Activated B cell treated with CpG ODN at 0.5 μM for 24 hours (primary cell): ENCODE measurements at regions of chr3 and their contacts with region 1.

Region 1: DNA sequence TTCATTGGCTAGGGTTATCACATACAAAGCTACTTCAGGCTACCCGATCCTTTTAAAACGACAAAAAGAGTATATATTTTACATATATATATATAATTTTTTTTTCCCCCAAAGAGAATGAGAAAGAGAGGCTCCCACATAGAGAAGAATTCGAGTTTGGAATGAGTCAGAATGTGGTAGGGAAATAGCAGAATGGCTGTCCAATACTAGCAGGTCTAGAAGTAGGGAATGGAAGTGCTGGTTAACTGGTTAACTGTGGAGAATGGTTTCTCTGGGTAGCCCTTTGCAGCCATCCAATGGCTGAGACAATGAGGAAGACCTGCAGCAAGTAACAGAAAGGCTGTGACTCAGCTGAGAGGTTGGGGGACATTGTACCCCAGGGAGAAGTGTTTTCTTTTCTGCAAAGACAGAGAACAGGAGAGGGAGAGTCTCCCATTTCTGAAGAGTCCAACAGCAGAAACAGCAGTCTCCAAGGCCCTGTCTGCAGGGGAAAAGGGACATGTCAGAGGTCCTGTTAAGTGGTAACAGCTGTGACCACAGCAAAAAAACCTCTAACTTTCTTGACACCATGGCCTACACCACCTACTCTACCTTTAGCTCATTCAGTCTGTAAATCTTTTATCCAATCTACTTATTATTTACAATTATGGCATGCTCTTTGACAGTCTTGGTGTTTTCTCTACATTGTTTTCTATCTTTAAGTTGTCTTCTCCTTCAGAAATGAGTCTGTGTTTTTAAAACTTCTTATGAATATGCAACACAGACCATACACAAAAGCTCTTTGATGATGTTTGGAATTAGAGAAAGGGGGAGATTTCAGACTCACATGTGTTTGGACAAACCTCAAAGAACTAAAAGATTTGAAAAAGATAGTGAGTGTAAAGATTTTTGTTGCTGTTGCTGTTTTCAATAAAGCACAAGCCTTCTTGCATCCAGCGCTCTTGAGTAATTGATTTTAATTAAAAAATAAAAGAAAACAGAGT is 116.1 kb upstream of the SLC7A14 start:
- DNase-seq: no peak
- ATAC-seq: no peak
- H3K4me3 Mint-ChIP-seq: no peak overlapping the region
- H3K27ac Mint-ChIP-seq: no peak overlapping the region
- H3K4me1 Mint-ChIP-seq: no peaks in the 10 kb centered on the region
- H3K27me3 Mint-ChIP-seq: peaks cover 12% of the 10 kb centered on the region
- CTCF ChIP-seq: no peak

Region 2: DNA sequence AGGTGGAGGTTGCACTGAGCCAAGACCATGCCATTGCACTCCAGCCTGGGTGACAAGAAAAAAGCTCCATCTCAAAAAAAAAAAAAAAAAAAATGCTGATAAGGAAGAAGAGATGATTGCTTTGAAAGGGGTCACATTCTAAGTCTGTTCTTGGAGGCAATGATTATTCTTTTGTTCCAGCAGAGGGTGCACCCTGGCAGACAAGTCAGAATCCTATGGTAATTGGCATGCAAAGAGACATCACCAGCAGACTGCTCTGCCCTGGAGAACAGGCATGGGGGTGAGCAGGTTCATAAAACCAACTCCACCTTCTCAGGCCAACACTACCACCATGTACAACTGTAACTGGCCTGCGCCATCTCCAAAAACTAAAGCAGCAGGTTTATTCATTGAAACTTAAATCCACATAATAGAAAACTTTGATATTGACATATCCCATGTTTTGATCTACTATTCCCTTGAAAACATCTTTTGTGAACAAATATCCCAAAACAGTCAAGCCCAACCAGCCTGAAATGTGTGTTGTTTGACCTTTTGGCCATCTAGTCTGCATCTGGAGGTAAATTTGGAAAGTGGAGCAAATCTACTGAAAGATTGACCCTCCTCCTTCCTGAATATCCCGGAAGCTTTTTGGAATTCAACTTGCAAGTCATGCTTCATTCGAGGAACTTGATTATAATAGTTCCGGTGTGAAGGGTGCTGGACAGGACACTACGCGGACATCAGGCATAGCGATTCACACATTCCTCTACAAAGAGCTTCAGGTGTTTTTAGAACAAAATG is 1138.8 kb before region 1 on chr3:
- CTCF ChIA-PET with region 1: no interaction called
- POLR2A ChIA-PET with region 1: no interaction called
- intact Hi-C with region 1: no loop called
- DNase-seq: no peak
- ATAC-seq: peak; percentile 49
- H3K4me3 Mint-ChIP-seq: no peak overlapping the region
- H3K27ac Mint-ChIP-seq: no peak overlapping the region
- H3K4me1 Mint-ChIP-seq: no peaks in the 10 kb centered on the region
- H3K27me3 Mint-ChIP-seq: no peaks in the 10 kb centered on the region
- CTCF ChIP-seq: no peak

Region 3: GRCh38 chr3:169984292-169984691 is 717.7 kb before region 1 on chr3:
- CTCF ChIA-PET with region 1: no interaction called
- POLR2A ChIA-PET with region 1: no interaction called
- intact Hi-C with region 1: no loop called
- DNase-seq: no peak
- ATAC-seq: no peak
- H3K4me3 Mint-ChIP-seq: no peak overlapping the region
- H3K27ac Mint-ChIP-seq: peak overlapping the region; percentile 47
- H3K4me1 Mint-ChIP-seq: peaks cover 30% of the 10 kb centered on the region
- H3K27me3 Mint-ChIP-seq: no peaks in the 10 kb centered on the region
- CTCF ChIP-seq: no peak

Region 4: GRCh38 chr3:170037463-170038433 is 664.2 kb before region 1 on chr3 and contains the start of gene GPR160:
- CTCF ChIA-PET with region 1: no interaction called
- POLR2A ChIA-PET with region 1: no interaction called
- intact Hi-C with region 1: no loop called
- DNase-seq: peak; percentile 88
- ATAC-seq: peak; percentile 77
- H3K4me3 Mint-ChIP-seq: peak within 1 kb of the TSS; percentile 93
- H3K27ac Mint-ChIP-seq: peak within 1 kb of the TSS; percentile 88
- H3K4me1 Mint-ChIP-seq: peaks cover 46% of the 10 kb centered on the region
- H3K27me3 Mint-ChIP-seq: no peaks in the 10 kb centered on the region
- CTCF ChIP-seq: peak; percentile 52
- total RNA-seq, gene GPR160: 63.2 and 65.5 TPM in 2 replicates

Region 5: DNA sequence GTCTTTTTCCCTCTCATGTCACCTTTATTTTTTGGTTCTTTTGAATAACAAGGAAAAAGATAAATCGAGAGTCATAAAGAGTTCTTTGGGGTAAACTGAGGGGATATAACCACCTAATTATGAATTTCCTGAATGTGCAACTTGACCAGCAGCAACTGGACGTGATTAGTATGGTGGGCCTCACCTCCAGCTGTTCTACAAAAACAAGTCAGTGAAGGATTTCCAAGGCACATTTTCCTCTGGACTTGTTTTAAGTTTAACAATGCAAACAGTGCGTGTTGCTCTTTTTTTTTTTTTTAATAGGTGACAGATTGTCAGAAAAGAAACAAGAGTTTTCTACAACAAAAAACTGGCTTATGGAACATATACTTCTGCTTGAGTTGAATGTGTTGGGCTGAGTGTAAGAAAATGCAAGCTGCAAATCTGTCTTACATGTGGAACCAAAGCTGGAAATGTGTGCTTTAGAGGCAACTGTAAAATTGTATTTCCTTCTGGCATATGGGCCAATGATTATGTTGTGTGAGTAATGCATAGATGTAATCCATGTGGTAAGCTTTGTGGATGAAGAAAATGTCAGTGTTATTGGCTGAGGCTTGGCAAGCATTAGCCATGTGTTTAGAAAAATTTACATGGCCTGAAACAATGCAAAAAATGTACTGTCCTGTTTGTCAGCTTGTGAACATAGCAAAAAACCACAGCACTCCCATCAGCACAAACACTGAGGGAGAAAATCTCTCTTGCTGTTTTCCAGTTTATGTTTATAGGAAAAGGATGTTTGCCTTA is 1292.8 kb after region 1 on chr3:
- CTCF ChIA-PET with region 1: no interaction called
- POLR2A ChIA-PET with region 1: interaction called, 10 read pairs
- intact Hi-C with region 1: no loop called
- DNase-seq: no peak
- ATAC-seq: no peak
- H3K4me3 Mint-ChIP-seq: no peak overlapping the region
- H3K27ac Mint-ChIP-seq: no peak overlapping the region
- H3K4me1 Mint-ChIP-seq: no peaks in the 10 kb centered on the region
- H3K27me3 Mint-ChIP-seq: peaks cover 9% of the 10 kb centered on the region
- CTCF ChIP-seq: no peak